A673 (cell line): ENCODE measurements at regions of chr9 and their contacts with region 1.

Region 1: DNA sequence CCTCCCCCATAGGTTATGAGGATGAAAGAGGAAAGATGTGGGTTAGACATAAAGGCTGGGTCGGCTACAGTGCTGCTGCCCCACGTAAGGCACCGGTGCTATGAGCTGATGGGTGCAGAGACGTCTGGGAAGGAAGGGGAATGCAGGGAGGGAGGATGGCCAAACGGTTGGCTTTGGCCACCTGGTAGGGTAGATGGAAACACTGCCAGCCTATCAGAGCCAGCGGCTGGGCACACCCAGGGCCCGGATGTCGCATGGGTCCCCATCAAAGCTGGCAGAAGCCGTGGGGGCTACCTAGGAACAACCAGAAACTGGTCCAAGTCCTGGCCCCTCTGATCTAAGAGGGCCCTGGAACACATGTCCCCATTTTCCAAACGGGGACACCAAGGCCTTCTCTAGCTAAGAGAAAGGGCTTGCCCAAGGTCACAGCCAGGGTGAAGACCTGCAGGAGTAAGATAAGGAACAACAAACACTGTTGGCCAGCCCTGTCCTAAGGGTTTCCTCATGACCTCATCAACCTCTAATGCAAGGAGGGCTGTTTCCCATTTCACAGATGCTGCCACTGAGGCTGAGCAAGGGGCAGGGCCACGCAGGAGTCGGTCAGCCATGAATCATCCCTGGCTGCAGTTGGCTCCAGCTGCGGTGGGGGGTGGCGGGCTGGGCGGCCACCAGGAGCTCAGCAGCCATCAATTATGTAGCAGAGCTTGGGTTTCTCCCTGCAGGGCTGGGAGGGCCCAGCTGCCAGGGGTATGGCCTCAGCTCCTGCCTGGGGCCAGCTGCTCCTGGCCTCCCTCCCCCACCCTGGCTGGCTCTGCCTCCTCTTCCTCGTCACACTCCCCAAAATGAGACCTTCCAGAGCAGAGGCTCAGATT is 4.9 kb downstream of the SH3GLB2 start:
- DNase-seq: no peak
- H3K4me3 ChIP-seq: no peak overlapping the region
- H3K27ac ChIP-seq: no peak overlapping the region
- H3K4me1 ChIP-seq: peaks cover 20% of the 10 kb centered on the region
- H3K27me3 ChIP-seq: no peaks in the 10 kb centered on the region
- CTCF ChIP-seq: no peak

Region 2: GRCh38 chr9:128771745-128772519 is 251.3 kb before region 1 on chr9 and contains the start of gene ZER1:
- CTCF ChIA-PET with region 1: no interaction called
- POLR2A ChIA-PET with region 1: interaction called, 18 read pairs
- intact Hi-C with region 1: no loop called
- DNase-seq: peak; percentile 95
- H3K4me3 ChIP-seq: peak within 1 kb of the TSS; percentile 94
- H3K27ac ChIP-seq: peak within 1 kb of the TSS; percentile 82
- H3K4me1 ChIP-seq: peaks cover 11% of the 10 kb centered on the region
- H3K27me3 ChIP-seq: no peaks in the 10 kb centered on the region
- CTCF ChIP-seq: no peak
- total RNA-seq, gene ZER1: 12.9 and 19.6 TPM in 2 replicates

Region 3: GRCh38 chr9:129270903-129271431 is 247.7 kb after region 1 on chr9:
- CTCF ChIA-PET with region 1: no interaction called
- POLR2A ChIA-PET with region 1: no interaction called
- intact Hi-C with region 1: no loop called
- DNase-seq: no peak
- H3K4me3 ChIP-seq: no peak overlapping the region
- H3K27ac ChIP-seq: no peak overlapping the region
- H3K4me1 ChIP-seq: no peaks in the 10 kb centered on the region
- H3K27me3 ChIP-seq: no peaks in the 10 kb centered on the region
- CTCF ChIP-seq: no peak